ENCODE measurements at regions of chr10 and their contacts with region 1.

Region 1: DNA sequence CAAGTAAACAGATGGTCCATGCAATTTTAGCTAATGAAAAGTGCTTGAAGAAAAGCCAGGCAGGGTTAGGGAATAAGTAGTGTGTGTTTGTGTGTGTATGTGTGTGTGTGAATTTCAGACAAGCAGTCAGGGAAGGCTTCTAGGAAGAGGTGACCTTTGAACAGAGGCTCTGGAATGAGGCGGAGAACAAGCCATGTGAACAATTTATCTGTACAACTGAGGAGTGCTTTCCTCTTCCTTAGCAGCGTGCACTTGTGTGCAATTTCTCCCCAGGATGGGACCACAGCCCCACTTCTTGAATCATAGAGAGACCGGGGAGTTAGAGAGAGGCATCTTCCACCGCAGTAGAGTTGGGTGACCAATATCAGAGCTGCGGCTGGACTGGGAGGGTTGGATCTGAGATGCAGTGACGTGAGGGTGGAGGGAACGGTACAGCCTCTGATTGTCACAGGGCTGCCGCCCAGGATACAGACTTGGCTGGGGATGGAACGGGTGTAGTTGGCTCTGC is 69.2 kb upstream of the FAM171A1 start:
- DNase-seq: no peak
- H3K4me3 ChIP-seq: no peak overlapping the region
- H3K27ac ChIP-seq: peak overlapping the region in 1 of 2 donors; percentile 73
- H3K4me1 ChIP-seq: peaks cover 0 to 19% (median 5%) of the 10 kb centered on the region in 4 donors
- H3K27me3 ChIP-seq: no peaks in the 10 kb centered on the region
- CTCF ChIP-seq: no peak

Region 2: GRCh38 chr10:15300697-15301096 is 139.6 kb before region 1 on chr10:
- intact Hi-C with region 1: no loop called
- DNase-seq: no peak
- H3K4me3 ChIP-seq: no peak overlapping the region
- H3K27ac ChIP-seq: no peak overlapping the region
- H3K4me1 ChIP-seq: no peaks in the 10 kb centered on the region
- H3K27me3 ChIP-seq: no peaks in the 10 kb centered on the region
- CTCF ChIP-seq: no peak

Region 3: DNA sequence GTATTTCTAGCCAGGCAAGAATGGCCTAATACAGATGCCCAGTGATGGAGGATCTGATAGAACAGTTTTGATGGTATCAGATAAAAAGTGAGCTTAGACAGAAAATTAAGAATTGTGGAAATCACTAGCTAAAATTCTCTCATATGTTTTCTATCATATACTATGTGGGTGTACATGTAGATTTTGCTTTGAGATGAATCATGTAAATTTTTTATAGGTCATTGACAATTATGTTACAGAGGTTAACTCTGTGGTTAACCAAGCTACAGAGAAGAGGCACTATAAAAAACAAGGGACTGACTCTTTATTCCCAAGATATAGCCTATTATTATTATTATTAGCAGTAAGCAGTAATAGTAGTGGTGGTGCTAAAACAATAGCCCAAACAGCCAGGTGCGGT is 123.0 kb after region 1 on chr10:
- intact Hi-C with region 1: loop called (anchors 10 kb)
- DNase-seq: no peak
- H3K4me3 ChIP-seq: no peak overlapping the region
- H3K27ac ChIP-seq: no peak overlapping the region
- H3K4me1 ChIP-seq: peaks cover 0 to 22% (median 2%) of the 10 kb centered on the region in 4 donors
- H3K27me3 ChIP-seq: no peaks in the 10 kb centered on the region
- CTCF ChIP-seq: no peak